ENCODE measurements at regions of chr13 and their contacts with region 1.

Region 1: DNA sequence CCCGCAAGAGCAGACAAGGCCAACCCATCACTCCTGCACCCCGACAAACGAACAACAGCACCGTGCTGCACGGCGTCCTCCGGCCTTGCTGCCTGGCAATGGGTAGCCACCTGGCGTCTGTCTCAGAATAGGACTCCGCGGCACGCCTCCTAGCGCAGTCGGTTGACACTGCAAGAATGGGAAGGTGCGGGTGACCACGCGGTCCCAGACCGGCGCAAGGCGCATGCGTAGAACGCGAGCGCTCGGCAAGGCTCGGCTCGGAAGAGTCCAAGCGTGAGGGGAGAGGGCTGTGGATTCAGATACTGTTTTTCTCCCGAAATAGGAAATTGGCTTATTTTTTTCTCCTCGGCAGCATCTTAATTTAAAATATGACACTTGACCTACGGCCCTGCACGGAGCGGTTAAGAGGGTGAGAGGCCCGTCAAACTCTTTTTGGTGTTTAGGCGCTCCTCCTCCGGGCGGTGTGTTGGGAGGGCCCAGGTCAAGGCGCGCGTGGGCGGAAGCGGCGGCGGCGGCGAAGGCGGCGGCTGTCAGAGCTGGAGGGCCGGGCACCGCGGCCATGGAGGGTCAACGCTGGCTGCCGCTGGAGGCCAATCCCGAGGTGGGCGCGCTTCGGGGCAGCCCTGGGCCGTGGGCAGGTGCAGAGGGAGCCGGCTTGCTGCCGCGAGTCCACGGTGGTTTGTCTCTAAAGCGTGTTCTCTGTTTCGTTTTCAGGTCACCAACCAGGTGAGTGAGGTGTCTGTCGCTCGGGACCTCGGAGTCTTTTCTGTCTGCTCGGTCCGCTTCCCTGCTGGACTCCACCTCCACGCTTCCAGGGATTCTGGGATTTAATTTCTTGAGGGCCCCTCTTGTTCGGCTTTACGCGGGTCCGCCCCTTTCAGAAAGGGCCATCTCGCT is at the start of gene UCHL3:
- DNase-seq: peak; percentile 98
- H3K4me3 Mint-ChIP-seq: peak within 1 kb of the TSS; percentile 87
- H3K27ac Mint-ChIP-seq: peak within 1 kb of the TSS; percentile 94
- H3K4me1 Mint-ChIP-seq: peaks cover 40% of the 10 kb centered on the region
- H3K27me3 Mint-ChIP-seq: no peaks in the 10 kb centered on the region
- total RNA-seq, gene UCHL3: 37.3 to 37.6 TPM

Region 2: DNA sequence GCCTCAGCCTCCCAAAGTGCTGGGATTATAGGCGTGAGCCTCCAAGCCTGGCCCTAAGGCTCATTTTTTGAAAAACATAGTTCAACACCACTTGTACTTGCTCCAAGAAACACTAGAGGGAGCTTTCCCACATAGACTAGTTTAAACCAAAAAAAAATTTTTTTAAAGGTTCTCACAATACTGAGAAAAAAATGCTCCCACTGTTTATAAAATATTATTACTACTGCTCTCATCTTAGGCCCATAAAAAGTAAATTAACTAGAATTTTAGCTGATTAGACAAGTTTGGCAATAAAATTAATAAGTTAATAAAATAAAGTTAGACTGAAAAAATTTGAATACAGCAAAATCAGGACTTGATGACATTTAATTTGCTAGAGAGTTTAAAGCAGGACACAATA is 177.0 kb before region 1 on chr13:
- CTCF ChIA-PET with region 1: interaction called, 15 read pairs
- intact Hi-C with region 1: loop called (anchors 1 kb)
- DNase-seq: no peak
- H3K4me3 Mint-ChIP-seq: no peak overlapping the region
- H3K27ac Mint-ChIP-seq: no peak overlapping the region
- H3K4me1 Mint-ChIP-seq: peaks cover 5% of the 10 kb centered on the region
- H3K27me3 Mint-ChIP-seq: no peaks in the 10 kb centered on the region

Region 3: GRCh38 chr13:75537401-75538365 is 11.8 kb before region 1 on chr13 and contains the start of gene COMMD6:
- CTCF ChIA-PET with region 1: interaction called, 4 read pairs
- intact Hi-C with region 1: loop called (anchors 1 kb)
- DNase-seq: peak; percentile 70
- H3K4me3 Mint-ChIP-seq: peak within 1 kb of the TSS; percentile 93
- H3K27ac Mint-ChIP-seq: peak within 1 kb of the TSS; percentile 81
- H3K4me1 Mint-ChIP-seq: peaks cover 25% of the 10 kb centered on the region
- H3K27me3 Mint-ChIP-seq: no peaks in the 10 kb centered on the region
- total RNA-seq, gene COMMD6: 95.4 to 105 TPM

Region 4: GRCh38 chr13:75766636-75767035 is 217.1 kb after region 1 on chr13:
- CTCF ChIA-PET with region 1: no interaction called
- intact Hi-C with region 1: loop called (anchors 2 kb)
- DNase-seq: peak; percentile 18
- H3K4me3 Mint-ChIP-seq: no peak overlapping the region
- H3K27ac Mint-ChIP-seq: peak overlapping the region; percentile 63
- H3K4me1 Mint-ChIP-seq: peaks cover 74% of the 10 kb centered on the region
- H3K27me3 Mint-ChIP-seq: peaks cover 4% of the 10 kb centered on the region